GM13976 (cell line): ENCODE measurements at regions of chrX and their contacts with region 1.

Region 1: DNA sequence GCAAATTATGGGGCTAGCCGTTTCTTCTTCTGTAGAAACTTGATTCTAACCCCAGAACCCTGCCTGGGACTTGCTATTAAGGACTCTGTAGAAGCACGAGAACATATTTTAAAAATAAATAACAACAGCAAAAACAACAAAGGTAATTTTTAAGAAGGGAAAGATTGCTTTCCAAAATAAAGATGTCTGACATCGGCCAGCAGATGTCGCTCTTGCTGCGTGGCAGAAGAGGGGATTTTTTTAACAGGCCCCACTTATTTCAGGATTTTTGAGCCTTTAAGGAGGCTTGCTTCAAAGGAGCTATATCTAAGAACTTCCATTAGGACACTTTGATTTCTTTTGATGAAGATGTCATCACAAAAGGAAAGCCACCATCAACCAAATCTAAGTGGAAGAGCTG is 62.8 kb upstream of the EGFL6 start:
- DNase-seq: peak; percentile 60
- CTCF ChIP-seq: peak; percentile 62

Region 2: DNA sequence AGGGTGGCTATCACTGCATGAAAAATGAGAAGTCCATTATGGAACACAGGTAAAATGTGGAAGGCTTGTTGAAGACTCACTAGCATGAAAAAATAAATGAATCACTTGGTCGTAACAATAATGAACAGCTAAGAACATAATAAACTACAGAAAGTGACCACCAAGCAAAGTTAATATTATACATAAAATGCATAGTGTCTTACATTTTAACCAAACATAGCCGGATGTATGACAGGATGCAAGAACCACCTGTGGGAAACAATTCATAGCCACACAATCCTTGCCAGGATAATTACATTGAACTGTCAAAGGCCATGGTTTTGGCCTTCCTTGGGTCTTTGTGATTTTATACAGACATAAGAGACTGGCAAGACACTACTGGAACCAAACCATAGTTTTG is 104.8 kb before region 1 on chrX:
- in situ Hi-C with region 1: no loop called
- DNase-seq: no peak
- CTCF ChIP-seq: no peak

Region 3: DNA sequence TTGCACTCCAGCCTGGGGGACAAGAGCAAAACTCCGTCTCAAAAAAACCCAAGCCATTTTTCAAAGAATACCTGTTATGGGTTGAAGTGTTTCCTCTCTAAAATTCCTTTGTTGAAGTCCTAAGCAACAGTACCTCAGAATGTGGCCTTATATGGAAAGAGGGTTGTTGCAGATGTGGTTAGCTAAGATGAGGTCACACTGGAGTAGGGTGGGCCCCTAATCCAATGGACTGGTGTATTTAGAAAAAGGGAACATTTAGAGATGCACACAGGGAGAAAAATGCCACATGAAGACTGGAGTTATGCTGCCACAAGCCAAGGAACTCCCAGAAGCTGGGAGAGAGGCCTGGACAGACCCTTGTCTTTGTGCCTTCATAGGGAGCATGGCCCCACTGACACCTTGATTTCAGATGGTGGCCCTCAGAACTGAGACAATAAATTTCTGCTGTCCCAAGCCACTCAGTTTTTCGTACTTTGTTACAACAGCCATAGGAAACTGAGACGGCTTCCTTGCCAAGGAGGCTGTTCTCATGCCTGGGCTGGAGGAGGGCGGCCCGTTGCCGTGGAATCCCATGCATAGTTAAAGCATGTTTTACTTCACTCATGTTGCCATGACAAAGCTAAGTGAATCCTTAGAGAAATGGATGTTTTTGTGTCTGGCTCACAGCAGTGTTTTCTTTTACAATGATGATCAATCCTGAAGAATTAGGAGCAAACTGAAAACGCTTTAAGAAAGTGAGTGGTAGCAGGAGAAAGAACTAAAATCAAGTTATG is 211.3 kb after region 1 on chrX:
- in situ Hi-C with region 1: no loop called
- DNase-seq: no peak
- CTCF ChIP-seq: no peak

Region 4: GRCh38 chrX:13898083-13898482 is 391.5 kb after region 1 on chrX:
- in situ Hi-C with region 1: loop called (anchors 25 kb)
- DNase-seq: peak; percentile 30
- CTCF ChIP-seq: peak; percentile 16

Region 5: GRCh38 chrX:14013054-14013453 is 506.5 kb after region 1 on chrX:
- in situ Hi-C with region 1: no loop called
- DNase-seq: no peak
- CTCF ChIP-seq: no peak